ENCODE measurements at regions of chr12 and their contacts with region 1.

Region 1: DNA sequence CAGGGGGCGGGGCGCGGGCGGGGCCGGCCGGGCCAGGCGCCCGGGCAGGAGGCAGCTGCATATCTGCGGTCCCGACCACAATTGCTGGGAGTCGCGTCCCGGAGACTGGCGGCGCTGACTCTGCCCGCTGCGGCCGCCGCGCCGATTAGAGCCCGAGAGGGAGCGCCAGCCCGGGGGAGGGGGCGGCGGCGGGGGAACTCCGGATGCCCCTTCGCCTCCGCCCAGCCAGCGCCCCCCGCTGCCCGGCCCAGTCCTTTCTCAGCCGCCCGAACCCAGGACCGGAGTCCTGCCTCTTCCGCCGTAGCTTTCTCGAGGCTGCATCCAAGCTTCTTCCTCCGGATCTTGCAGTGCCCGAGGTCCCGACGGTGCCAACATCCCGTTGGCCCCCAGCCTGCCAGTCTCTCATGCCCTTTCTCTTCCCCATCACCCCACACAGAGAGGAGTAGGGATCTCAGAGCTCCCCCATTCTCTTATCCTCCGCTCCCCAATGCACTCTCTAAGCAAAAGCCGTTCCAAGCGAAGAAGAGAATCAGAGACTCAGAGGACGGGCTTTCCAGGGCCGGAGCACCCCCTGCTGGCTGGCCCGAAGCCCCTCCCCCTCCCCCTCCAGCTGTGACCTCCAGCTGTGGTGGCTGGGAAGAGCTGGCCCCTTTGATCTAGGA is 8.8 kb upstream of the SP7 start:
- DNase-seq: peak; percentile 61
- ATAC-seq: peak; percentile 90
- H3K4me3 Mint-ChIP-seq: peak overlapping the region; percentile 93
- H3K27ac Mint-ChIP-seq: peak overlapping the region; percentile 67
- H3K4me1 Mint-ChIP-seq: peaks cover 15% of the 10 kb centered on the region
- H3K27me3 Mint-ChIP-seq: peaks cover 6% of the 10 kb centered on the region
- CTCF ChIP-seq: no peak

Region 2: DNA sequence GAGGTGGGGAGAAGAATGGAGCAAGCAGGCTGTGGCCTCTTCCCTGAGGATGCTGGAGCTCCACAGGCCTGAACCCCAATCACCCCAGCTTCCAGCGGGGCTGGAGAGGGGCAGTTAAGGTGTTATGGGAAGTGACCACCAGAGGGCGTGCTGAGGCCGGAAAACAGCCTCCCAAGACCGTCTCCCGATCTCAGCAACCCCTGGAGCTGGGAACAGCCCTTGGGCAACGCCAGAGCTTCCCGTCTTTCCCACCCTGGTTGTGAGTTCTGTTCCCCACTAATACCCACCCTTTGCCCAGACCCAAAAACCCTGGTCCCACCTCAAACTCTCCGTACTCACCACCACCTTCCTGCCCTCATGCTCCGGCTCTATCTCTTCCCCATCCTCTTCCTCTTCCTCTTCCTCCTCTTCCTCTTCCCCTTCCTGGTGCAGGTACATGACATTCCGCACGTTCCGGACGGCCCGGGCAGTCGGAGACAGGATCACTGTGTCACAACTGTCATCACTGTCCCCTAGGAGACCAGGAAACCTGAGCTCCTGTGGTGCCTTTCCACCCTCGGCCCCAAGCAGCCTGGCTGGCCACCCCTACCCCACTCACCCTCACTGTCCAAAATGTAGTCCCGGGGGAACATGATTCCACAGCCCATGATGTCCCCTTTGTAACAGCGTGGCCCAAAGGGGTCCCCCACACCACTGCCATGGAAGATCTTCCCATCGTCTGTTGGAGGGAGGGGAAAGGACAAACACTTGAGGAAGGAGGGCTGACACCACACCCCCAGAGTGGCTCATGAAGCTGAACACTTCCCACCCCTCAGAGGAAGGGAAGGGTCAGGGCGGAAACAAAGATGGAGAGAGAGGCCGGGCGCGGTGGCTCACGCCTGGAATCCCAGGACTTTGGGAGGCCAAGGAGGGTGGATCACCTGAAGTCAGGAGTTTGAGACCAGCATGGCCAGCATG is 278.7 kb before region 1 on chr12:
- CTCF ChIA-PET with region 1: interaction called, 5 read pairs
- POLR2A ChIA-PET with region 1: no interaction called
- intact Hi-C with region 1: loop called (anchors 1 kb)
- DNase-seq: peak; percentile 55
- ATAC-seq: peak; percentile 63
- H3K4me3 Mint-ChIP-seq: no peak overlapping the region
- H3K27ac Mint-ChIP-seq: no peak overlapping the region
- H3K4me1 Mint-ChIP-seq: peaks cover 10% of the 10 kb centered on the region
- H3K27me3 Mint-ChIP-seq: no peaks in the 10 kb centered on the region
- CTCF ChIP-seq: no peak

Region 3: GRCh38 chr12:53205747-53206419 is 139.1 kb before region 1 on chr12:
- CTCF ChIA-PET with region 1: interaction called, 33 read pairs
- POLR2A ChIA-PET with region 1: no interaction called
- intact Hi-C with region 1: no loop called
- DNase-seq: peak; percentile 50
- ATAC-seq: peak; percentile 66
- H3K4me3 Mint-ChIP-seq: peak overlapping the region; percentile 89
- H3K27ac Mint-ChIP-seq: peak overlapping the region; percentile 83
- H3K4me1 Mint-ChIP-seq: peaks cover 93% of the 10 kb centered on the region
- H3K27me3 Mint-ChIP-seq: no peaks in the 10 kb centered on the region
- CTCF ChIP-seq: no peak

Region 4: GRCh38 chr12:53287741-53288216 is 57.2 kb before region 1 on chr12:
- CTCF ChIA-PET with region 1: interaction called, 3 read pairs
- POLR2A ChIA-PET with region 1: interaction called, 3 read pairs
- intact Hi-C with region 1: loop called (anchors 1 kb)
- DNase-seq: peak; percentile 53
- ATAC-seq: peak; percentile 100
- H3K4me3 Mint-ChIP-seq: no peak overlapping the region
- H3K27ac Mint-ChIP-seq: no peak overlapping the region
- H3K4me1 Mint-ChIP-seq: peaks cover 4% of the 10 kb centered on the region
- H3K27me3 Mint-ChIP-seq: no peaks in the 10 kb centered on the region
- CTCF ChIP-seq: no peak

Region 5: DNA sequence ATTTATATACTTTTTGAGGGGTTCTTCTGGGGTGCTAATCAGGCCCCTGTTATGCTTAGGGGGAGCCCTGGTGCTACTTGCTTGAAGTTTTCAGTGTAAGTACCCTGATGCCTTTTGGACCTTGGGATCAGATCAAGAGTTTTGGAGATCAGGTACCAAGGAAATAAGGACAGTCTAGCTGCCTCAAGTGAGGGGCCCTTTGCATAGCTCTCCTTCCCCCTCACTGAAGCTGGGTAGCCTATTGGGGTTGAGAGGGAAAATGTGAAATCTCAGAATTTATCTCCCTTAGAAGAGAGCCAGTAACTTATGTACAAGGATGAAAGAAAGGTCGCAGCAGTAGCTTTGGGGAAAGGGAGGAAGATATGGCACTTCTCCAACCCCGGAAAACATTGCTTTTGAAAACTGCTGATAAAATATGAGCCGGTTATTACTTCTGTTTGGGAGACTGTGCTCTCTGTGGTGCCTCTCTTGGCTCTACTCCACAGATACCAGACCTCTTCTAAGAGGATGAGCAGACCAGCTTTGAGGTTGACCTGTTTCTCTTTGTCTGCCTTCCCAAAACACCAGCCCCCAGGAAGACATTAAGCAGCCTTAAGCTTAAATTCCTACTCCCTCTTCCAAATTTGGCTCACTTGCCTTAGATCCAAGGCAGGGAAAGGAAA is 69.9 kb after region 1 on chr12:
- CTCF ChIA-PET with region 1: interaction called, 28 read pairs
- POLR2A ChIA-PET with region 1: interaction called, 3 read pairs
- intact Hi-C with region 1: no loop called
- DNase-seq: no peak
- ATAC-seq: no peak
- H3K4me3 Mint-ChIP-seq: no peak overlapping the region
- H3K27ac Mint-ChIP-seq: peak overlapping the region; percentile 35
- H3K4me1 Mint-ChIP-seq: peaks cover 60% of the 10 kb centered on the region
- H3K27me3 Mint-ChIP-seq: no peaks in the 10 kb centered on the region
- CTCF ChIP-seq: no peak

Region 6: GRCh38 chr12:53465679-53466078 is 120.7 kb after region 1 on chr12:
- CTCF ChIA-PET with region 1: no interaction called
- POLR2A ChIA-PET with region 1: interaction called, 10 read pairs
- intact Hi-C with region 1: no loop called
- DNase-seq: no peak
- ATAC-seq: no peak
- H3K4me3 Mint-ChIP-seq: no peak overlapping the region
- H3K27ac Mint-ChIP-seq: no peak overlapping the region
- H3K4me1 Mint-ChIP-seq: peaks cover 12% of the 10 kb centered on the region
- H3K27me3 Mint-ChIP-seq: no peaks in the 10 kb centered on the region
- CTCF ChIP-seq: no peak

Region 7: GRCh38 chr12:53561590-53561953 is 216.6 kb after region 1 on chr12:
- CTCF ChIA-PET with region 1: no interaction called
- POLR2A ChIA-PET with region 1: no interaction called
- intact Hi-C with region 1: no loop called
- DNase-seq: no peak
- ATAC-seq: no peak
- H3K4me3 Mint-ChIP-seq: no peak overlapping the region
- H3K27ac Mint-ChIP-seq: no peak overlapping the region
- H3K4me1 Mint-ChIP-seq: peaks cover 11% of the 10 kb centered on the region
- H3K27me3 Mint-ChIP-seq: no peaks in the 10 kb centered on the region
- CTCF ChIP-seq: no peak

Region 8: GRCh38 chr12:54891717-54892554 is 1547.0 kb after region 1 on chr12:
- CTCF ChIA-PET with region 1: no interaction called
- POLR2A ChIA-PET with region 1: no interaction called
- intact Hi-C with region 1: no loop called
- DNase-seq: no peak
- ATAC-seq: no peak
- H3K4me3 Mint-ChIP-seq: no peak overlapping the region
- H3K27ac Mint-ChIP-seq: no peak overlapping the region
- H3K4me1 Mint-ChIP-seq: no peaks in the 10 kb centered on the region
- H3K27me3 Mint-ChIP-seq: peaks cover 10% of the 10 kb centered on the region
- CTCF ChIP-seq: no peak